ENCODE measurements at regions of chr4 and their contacts with region 1.

Region 1: DNA sequence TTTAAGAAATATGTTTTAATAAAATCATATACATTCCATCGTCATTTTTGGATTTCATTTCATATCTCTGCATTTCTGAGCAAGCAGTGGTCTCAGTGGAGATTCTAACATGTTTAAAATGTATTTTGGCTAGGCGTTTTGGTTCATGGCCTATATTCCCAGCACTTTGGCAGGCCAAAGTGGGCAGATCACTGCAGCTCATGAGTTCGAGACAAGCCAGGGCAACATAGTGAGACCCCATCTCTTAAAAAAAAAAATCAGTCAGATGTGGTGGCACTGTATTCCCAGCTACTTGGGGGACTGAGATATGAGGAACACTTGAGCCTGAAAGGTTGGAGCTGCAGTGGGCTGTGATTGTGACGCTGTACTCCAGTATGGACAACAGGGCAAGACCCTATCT is 67.5 kb upstream of the RAB33B start:
- DNase-seq: no peak
- H3K4me3 ChIP-seq: no peak overlapping the region
- H3K27ac ChIP-seq: no peak overlapping the region
- H3K4me1 ChIP-seq: peaks cover 0 to 3% (median 0%) of the 10 kb centered on the region in 4 donors
- H3K27me3 ChIP-seq: no peaks in the 10 kb centered on the region
- CTCF ChIP-seq: no peak
- EP300 ChIP-seq: no peak
- POLR2A ChIP-seq: no peak

Region 2: GRCh38 chr4:138716559-138717335 is 669.7 kb before region 1 on chr4:
- in situ Hi-C with region 1: no loop called
- intact Hi-C with region 1: no loop called
- DNase-seq: no peak
- H3K4me3 ChIP-seq: no peak overlapping the region
- H3K27ac ChIP-seq: no peak overlapping the region
- H3K4me1 ChIP-seq: no peaks in the 10 kb centered on the region
- H3K27me3 ChIP-seq: no peaks in the 10 kb centered on the region
- CTCF ChIP-seq: no peak
- EP300 ChIP-seq: no peak
- POLR2A ChIP-seq: no peak

Region 3: GRCh38 chr4:140395668-140396067 is 1009.2 kb after region 1 on chr4:
- in situ Hi-C with region 1: no loop called
- intact Hi-C with region 1: loop called (anchors 10 kb)
- DNase-seq: no peak
- H3K4me3 ChIP-seq: no peak overlapping the region
- H3K27ac ChIP-seq: no peak overlapping the region
- H3K4me1 ChIP-seq: no peaks in the 10 kb centered on the region
- H3K27me3 ChIP-seq: no peaks in the 10 kb centered on the region
- CTCF ChIP-seq: no peak
- EP300 ChIP-seq: no peak
- POLR2A ChIP-seq: no peak

Measured in transverse colon (tissue), 4 donors.